Left colon (tissue), 2 donors: ENCODE measurements at regions of chr6 and their contacts with region 1.

Region 1: DNA sequence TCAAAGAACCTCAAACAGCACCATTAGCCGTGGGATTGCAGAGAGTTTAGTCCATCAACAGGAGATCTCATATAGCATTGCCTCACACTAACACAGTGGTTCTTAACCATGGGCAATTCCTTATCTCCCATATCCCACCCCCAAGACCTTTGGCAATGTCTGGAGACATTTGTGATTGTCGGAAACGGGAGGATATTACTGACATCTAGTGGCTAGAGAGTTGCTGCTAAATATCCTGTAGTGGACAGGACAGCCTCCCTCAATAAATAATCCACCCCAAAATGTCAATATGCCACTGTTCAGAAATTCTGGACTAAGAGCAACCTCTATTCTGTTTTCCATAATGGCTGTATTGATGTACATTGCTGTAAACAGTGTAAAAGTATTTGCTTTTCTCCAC is 210.1 kb upstream of the CCN2 start:
- DNase-seq: no peak
- ATAC-seq: peak; percentile 64

Region 2: DNA sequence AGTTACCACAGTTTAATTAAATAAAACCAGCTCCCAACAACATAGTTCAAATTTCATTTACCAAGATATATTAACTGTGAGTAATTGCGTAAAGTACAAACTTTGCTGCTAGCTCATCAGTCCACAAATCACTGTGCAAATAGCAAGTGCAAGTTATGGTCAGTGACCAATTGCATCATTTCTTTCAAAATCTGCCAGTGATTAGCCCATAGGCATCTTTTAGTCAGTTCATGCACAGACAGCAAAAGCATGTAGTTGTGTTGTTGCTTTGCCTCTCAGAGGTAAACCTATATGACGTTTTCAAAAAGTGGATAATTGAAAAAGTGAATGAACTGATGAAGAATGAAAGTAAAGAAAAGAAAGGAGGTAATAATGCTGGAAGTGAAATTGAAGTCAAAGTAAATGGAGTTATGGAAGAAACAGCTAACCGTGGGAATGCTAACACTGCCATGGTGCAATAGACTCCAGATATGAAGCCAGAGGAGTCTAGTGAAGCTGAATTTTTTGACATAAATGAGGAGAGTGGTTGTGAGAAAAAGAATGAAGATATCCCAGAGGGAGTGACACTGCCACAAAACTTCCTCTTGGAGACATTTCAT is 316.9 kb before region 1 on chr6:
- intact Hi-C with region 1: no loop called
- DNase-seq: no peak
- ATAC-seq: no peak

Region 3: DNA sequence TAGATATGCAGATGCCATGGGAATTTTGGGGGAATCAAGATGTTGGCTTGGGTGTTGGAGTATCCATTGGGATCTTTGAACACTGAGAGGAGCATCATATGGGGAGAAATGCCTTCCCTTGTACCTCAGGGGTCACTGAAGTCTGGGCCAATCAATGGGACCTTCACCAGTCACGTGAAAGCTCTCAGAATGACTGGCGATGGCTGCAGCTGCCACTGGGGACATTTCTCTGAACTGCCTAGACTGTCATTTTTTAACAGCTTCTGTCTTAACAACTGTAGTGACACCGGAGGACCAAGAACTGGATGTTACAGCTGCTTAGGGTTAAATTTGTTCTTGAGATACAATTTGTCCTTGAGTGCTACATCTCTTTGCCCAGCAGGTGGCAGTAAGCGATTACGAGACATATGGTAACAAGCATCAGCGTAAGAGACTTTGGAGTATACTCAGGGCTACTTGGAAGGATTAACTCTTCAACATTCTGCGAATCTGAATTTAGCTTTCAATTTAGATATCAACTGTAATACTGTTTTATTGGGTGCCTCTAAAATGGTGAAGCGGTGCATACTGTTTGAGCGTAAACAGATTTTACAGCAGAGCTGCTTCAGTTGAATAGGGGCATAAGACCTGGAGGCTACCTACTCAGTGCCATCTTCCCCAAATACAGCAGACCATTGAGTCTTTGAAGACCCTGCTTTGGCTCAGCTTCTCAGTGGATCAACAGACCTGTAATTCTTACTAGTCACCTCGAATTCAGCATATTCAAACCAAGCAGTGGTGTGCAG is 246.1 kb before region 1 on chr6:
- intact Hi-C with region 1: loop called in 1 of 2 experiments (anchors 5 kb)
- DNase-seq: peak; percentile 46 to 72
- ATAC-seq: peak; percentile 77

Region 4: GRCh38 chr6:132333639-132334520 is 172.6 kb after region 1 on chr6:
- intact Hi-C with region 1: no loop called
- DNase-seq: peak in 1 of 2 donors; percentile 4
- ATAC-seq: peak; percentile 67